Activated CD8-positive, alpha-beta T cell treated with anti-CD3 and anti-CD28 coated beads, Interleukin-2, amount 10 ng/mL, durations not matched to agents 7 days and 5 days (primary cell): ENCODE measurements at regions of chr6 and their contacts with region 1.

Region 1: DNA sequence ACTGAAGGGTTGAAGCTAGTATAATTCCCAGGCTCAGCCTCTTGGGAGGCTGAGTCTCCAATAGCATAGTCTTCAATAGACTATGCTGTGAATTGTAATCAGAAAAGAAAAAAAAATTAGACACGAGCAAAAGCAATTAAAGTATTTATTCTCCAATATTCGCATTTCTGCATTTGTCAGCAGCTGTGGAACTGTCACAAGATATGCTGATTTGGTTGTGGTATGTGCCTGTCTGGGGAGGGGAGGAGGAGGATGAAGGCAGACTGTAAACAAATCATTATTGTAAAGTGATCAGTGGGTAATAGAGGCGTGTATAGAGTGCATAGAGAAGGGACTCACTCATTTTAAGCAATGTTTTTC is 10.1 kb upstream of the BICRAL start:
- DNase-seq: peak; percentile 33
- ATAC-seq: peak; percentile 27
- H3K4me3 Mint-ChIP-seq: peak overlapping the region; percentile 72
- H3K27ac Mint-ChIP-seq: peak overlapping the region; percentile 100
- H3K4me1 Mint-ChIP-seq: peaks cover 51% of the 10 kb centered on the region
- H3K27me3 Mint-ChIP-seq: no peaks in the 10 kb centered on the region

Region 2: DNA sequence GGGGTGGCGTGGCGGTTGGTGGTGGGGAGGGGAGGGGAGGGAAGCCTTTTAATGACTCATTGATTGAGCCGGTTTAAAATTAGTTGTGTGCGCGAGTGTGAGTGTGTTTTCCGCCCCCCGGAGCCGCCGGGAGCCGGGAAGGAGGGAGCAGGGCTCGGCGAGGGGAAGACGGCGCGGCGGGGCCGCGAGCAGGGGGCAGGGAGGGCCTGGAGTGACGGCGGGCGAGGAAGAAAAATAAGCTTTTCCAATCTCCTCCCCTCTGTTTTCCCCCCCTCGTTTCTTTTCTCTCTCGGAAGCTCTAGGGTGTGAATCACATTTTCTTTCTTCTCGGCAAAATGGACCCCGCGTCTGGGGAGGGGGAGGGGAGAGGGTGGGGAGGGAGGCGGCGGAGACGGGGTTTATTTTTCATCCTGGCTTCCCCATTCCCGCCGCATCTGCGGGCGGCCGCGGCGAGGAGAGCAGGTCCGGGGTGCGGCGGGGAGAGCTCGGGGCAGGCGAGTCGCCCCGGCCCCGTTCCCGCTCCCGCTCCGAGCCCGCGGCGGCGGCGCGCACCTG is 11.0 kb after region 1 on chr6:
- CTCF ChIA-PET with region 1: interaction called, 8 read pairs
- POLR2A ChIA-PET with region 1: interaction called, 153 read pairs
- DNase-seq: peak; percentile 76
- ATAC-seq: peak; percentile 54
- H3K4me3 Mint-ChIP-seq: peak overlapping the region; percentile 95
- H3K27ac Mint-ChIP-seq: peak overlapping the region; percentile 99
- H3K4me1 Mint-ChIP-seq: peaks cover 25% of the 10 kb centered on the region
- H3K27me3 Mint-ChIP-seq: no peaks in the 10 kb centered on the region